Calu3 (cell line): ENCODE measurements at regions of chr2 and their contacts with region 1.

Region 1: GRCh38 chr2:10084223-10084865 is 4.1 kb upstream of the CYS1 start:
- DNase-seq: no peak
- H3K4me3 Mint-ChIP-seq: no peak overlapping the region
- H3K27ac Mint-ChIP-seq: no peak overlapping the region
- H3K4me1 Mint-ChIP-seq: peaks cover 49% of the 10 kb centered on the region
- H3K27me3 Mint-ChIP-seq: peaks cover 45% of the 10 kb centered on the region
- CTCF ChIP-seq: no peak

Region 2: DNA sequence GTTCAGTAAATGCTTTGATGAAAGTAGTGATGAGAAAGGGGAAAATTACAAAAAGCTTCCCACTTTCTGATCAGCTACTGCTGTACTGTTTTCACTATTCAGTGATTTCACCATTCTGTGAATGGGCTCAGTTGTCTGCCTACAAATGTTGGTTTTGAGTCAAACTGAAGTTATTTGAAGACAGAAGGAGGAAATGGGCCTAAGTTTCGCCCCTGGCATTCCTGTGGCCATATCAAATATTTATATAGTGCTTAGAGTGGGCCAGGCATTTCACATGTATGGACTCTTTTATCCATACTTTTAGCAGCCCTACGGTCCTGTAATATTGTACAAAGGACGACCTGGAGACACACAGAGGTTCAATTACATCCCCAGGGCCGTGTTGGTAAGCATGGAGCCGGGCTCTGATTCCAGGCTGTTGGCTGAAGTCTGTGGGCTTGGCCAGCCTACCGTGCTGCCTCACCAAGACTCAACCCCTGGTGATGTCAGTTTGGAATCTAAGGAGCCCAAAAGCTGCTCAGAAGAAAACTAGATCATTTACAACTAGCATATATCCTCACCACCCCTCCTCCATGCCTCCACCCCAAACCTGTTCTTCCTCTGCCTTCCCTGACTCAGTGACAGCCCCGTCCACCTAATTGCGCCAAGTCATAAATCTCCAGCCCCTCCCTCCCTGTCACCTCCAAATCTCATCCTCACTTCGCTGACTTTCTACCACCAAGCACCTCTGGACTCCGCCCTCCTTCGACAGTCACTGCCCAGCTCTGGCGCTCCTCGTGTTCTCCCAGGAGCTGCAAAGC is 142.9 kb before region 1 on chr2:
- CTCF ChIA-PET with region 1: no interaction called
- intact Hi-C with region 1: no loop called
- DNase-seq: no peak
- H3K4me3 Mint-ChIP-seq: no peak overlapping the region
- H3K27ac Mint-ChIP-seq: no peak overlapping the region
- H3K4me1 Mint-ChIP-seq: peaks cover 31% of the 10 kb centered on the region
- H3K27me3 Mint-ChIP-seq: peaks cover 17% of the 10 kb centered on the region
- CTCF ChIP-seq: no peak

Region 3: DNA sequence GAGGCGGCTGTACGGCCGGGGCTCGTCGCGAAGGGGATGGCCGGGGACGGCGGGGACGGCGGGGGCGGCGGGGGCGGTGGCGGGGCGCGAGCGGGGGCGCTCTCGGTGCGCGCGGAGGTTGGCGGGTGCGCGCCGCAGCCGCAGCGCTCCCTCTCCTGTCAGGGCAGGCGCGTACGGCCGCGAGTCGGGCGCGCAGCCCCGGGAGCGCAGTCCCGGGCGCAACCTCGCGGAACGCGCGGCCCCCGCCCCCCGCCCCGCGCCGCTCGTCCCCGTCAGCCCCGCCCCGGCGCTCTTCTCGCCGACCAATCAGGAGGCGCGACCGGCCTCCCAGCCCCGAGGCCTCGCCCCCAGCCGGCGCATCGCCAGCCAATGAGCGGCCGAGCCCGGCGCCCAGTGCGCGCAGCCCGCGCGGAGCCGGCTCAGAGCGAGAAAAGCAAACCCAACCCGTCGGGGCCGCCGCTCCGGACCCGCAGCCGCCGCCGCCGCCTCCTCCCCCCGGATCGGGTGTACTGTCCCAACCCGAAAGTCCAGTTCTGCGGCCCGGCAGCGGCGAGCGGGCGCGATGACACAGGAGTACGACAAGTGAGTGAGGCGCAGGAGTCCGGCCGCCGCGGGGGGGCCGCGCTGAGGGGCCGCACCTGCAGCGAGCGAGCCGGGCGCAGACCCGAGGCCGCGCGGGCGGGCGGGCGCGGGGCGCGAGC is 132.9 kb before region 1 on chr2 and contains the start of gene GRHL1:
- CTCF ChIA-PET with region 1: no interaction called
- intact Hi-C with region 1: no loop called
- DNase-seq: peak; percentile 95
- H3K4me3 Mint-ChIP-seq: peak within 1 kb of the TSS; percentile 67
- H3K27ac Mint-ChIP-seq: no peak within 1 kb of the TSS
- H3K4me1 Mint-ChIP-seq: peaks cover 35% of the 10 kb centered on the region
- H3K27me3 Mint-ChIP-seq: peaks cover 31% of the 10 kb centered on the region
- CTCF ChIP-seq: no peak
- total RNA-seq, gene GRHL1: 9.0 and 11.7 TPM in 2 replicates

Region 4: GRCh38 chr2:10019174-10019573 is 65.2 kb before region 1 on chr2:
- CTCF ChIA-PET with region 1: no interaction called
- intact Hi-C with region 1: no loop called
- DNase-seq: no peak
- H3K4me3 Mint-ChIP-seq: no peak overlapping the region
- H3K27ac Mint-ChIP-seq: no peak overlapping the region
- H3K4me1 Mint-ChIP-seq: no peaks in the 10 kb centered on the region
- H3K27me3 Mint-ChIP-seq: no peaks in the 10 kb centered on the region
- CTCF ChIP-seq: no peak

Region 5: DNA sequence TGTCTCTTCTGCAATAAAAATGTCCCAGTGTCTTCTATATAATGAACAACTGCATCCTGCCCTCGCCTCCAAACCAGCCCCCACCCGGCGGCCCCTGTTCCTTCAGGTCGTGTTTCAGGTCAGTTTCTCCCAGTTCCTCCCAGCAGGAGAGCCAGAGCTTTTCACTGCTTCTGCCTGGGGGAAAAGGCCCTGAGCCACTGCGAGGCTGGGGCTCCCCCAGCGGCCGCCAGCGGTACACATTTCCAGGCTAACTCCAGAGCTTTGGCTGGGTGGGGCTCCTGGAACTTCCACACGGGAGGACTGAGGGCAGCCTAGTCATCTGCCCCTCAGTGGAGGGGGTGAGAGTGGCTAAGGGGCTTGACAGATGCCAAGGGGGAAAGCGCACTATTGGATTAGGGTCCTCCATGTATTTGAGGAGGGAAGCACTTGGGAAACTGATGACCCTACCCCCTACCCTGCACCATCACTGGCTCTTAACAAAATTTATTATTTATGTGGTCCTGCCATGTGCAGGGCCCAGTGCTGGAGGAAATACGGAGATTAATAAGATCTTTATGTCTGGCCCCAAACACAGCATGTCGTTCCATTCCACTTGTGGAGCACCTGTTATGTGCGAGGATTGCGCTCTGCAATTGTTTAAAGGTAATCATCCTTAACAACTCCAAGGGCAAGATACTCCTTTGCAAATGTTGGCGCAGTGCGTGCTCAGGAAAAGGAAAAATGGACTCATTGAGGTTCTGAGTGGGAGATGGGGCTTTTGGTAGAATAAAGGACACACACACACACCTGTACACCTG is 13.2 kb after region 1 on chr2:
- CTCF ChIA-PET with region 1: interaction called, 23 read pairs
- intact Hi-C with region 1: no loop called
- DNase-seq: peak; percentile 80
- H3K4me3 Mint-ChIP-seq: no peak overlapping the region
- H3K27ac Mint-ChIP-seq: no peak overlapping the region
- H3K4me1 Mint-ChIP-seq: peaks cover 11% of the 10 kb centered on the region
- H3K27me3 Mint-ChIP-seq: no peaks in the 10 kb centered on the region
- CTCF ChIP-seq: peak; percentile 85

Region 6: DNA sequence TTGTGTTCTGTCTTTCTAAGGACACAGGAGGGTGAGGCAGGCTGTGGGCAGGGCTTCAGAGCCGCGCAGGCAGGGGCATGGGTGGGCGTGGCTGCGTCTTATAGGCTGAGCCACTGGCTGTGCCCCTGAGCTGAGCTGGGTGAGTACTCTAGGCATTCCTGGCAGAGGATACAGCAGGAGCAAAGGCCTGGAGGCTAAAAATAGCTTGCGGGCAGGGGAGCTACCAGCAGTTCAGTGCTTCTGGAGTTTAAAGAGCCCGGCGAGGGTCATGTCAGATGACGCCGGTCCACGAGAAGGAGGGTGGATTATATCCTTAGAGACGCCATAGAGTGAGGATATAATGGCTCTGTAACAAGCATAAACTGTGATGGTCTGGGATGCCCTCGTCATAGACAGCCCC is 759.8 kb after region 1 on chr2:
- CTCF ChIA-PET with region 1: no interaction called
- intact Hi-C with region 1: no loop called
- DNase-seq: peak; percentile 65
- H3K4me3 Mint-ChIP-seq: no peak overlapping the region
- H3K27ac Mint-ChIP-seq: no peak overlapping the region
- H3K4me1 Mint-ChIP-seq: peaks cover 12% of the 10 kb centered on the region
- H3K27me3 Mint-ChIP-seq: peaks cover 69% of the 10 kb centered on the region
- CTCF ChIP-seq: no peak